AG04449 (cell line): ENCODE measurements at regions of chr1 and their contacts with region 1.

Region 1: GRCh38 chr1:18902523-18903290 is at the start of gene ALDH4A1:
- DNase-seq: peak; percentile 86
- H3K4me3 ChIP-seq: peak within 1 kb of the TSS; percentile 83
- CTCF ChIP-seq: no peak

Region 2: GRCh38 chr1:18854331-18855025 is 48.2 kb before region 1 on chr1:
- CTCF ChIA-PET with region 1: no interaction called
- POLR2A ChIA-PET with region 1: no interaction called
- DNase-seq: no peak
- H3K4me3 ChIP-seq: no peak overlapping the region
- CTCF ChIP-seq: no peak

Region 3: DNA sequence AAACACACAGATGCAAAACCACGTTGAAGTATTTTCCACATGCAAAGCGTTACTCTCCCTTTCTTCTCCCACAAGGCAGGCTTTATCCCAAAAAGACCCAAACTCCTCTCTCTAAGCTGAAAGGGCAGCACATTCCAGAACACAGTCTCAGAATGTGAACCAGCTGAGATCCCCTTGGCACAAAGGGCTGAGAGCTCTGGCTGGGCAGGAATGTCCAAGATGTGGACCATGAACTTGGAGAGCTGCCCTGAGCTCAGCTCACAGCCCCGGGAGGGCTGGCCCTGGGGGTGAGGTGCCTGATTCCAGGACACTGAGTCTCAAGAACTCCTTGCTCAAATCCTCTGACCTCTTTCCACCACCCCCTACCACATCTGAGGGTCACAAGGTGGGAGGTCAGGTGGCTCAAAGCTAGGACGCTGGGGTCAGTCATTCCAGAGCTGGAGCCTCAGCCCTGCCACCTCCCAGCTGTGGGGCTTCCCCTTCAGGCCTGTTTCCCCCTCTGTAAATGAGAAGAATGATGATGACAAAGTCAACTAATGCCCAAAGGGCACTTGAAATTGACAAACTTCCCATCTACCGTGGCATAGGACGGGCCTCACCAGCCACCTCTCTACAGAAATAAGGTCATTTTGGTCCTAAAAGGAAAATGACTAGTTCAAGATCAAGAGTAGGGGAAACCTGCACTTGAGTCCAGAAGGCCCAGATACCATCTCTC is 11.8 kb before region 1 on chr1:
- CTCF ChIA-PET with region 1: interaction called, 21 read pairs
- POLR2A ChIA-PET with region 1: interaction called, 3 read pairs
- DNase-seq: no peak
- H3K4me3 ChIP-seq: no peak overlapping the region
- CTCF ChIP-seq: no peak

Region 4: DNA sequence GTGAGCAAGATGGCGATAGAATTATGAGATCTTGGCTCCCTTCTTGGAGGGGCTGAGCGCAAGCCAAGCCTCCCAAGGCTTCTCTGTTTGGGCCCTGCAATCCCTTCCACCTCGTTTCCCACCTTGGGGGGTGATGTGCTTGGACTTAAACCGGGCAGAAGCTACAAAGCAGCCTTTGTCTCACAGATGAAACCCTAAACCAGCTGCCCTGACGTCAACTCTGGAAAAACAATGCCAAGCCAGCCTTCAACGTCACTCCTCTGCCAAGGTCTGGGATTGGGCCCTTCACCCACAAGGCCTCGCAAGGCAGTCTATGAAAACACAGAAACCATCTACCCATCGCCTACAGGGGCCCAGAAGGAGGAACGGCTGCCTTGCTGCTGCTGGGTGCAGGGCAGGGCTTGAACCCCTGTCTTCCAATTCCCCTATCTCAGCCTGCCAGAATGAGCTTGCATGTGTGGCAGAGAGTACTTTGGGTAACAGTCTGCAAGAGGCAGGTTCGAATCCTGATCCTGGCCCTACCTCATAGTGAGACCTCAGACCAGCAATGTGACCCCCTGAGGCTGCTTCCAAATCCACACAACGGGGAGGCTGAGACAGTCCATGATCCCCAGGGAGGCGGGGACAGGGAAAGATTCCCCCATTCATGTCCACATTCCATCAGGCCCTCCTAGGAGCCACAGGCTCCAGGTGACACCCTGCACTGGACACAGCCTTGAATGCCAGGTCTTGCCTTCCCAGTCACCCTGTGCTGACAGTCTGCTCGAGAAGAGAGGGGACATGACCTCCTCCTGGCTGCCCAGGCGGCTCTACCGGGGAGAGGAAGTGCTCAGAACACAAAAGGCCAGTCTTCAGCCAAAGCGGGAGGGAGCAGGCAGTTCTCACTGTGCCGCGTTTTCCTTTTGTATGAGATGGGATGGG is 38.8 kb after region 1 on chr1:
- CTCF ChIA-PET with region 1: interaction called, 28 read pairs
- POLR2A ChIA-PET with region 1: interaction called, 3 read pairs
- DNase-seq: no peak
- H3K4me3 ChIP-seq: no peak overlapping the region
- CTCF ChIP-seq: no peak

Region 5: GRCh38 chr1:18972531-18972930 is 69.8 kb after region 1 on chr1:
- CTCF ChIA-PET with region 1: interaction called, 94 read pairs
- POLR2A ChIA-PET with region 1: interaction called, 3 read pairs
- DNase-seq: no peak
- H3K4me3 ChIP-seq: no peak overlapping the region
- CTCF ChIP-seq: no peak

Region 6: DNA sequence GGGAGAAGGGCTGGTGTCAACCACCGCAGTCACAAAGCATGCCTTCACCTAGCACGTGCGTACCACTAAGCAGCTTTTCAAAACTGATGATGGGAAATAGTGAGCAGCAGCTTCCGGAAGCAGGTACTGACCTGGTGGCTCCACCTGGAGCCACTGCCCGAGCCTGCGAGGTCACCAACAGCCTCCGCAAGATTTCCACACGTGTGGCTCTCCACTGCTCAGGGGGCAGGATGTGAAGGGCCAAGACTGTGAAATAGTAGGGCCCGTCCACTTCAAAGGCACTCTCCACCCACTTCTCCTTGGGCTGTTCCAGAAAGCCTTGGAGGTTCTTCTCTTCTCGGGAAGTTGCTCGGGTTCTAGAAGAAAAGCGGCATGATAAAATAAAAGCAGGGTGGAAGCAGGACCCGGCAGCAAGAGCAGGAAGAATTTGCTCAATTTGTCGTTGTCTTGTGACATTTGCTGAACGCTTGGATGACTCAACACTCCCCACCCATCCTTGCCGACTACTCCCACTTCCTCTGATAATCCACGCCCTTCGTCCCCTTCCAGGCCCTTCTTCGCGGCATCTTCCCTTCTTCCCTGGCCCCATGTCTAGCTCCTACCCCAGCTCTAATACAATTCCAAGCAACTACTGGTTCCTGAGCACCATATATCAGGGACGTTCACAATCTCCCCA is 178.6 kb after region 1 on chr1:
- CTCF ChIA-PET with region 1: interaction called, 85 read pairs
- POLR2A ChIA-PET with region 1: no interaction called
- DNase-seq: no peak
- H3K4me3 ChIP-seq: no peak overlapping the region
- CTCF ChIP-seq: no peak

Region 7: DNA sequence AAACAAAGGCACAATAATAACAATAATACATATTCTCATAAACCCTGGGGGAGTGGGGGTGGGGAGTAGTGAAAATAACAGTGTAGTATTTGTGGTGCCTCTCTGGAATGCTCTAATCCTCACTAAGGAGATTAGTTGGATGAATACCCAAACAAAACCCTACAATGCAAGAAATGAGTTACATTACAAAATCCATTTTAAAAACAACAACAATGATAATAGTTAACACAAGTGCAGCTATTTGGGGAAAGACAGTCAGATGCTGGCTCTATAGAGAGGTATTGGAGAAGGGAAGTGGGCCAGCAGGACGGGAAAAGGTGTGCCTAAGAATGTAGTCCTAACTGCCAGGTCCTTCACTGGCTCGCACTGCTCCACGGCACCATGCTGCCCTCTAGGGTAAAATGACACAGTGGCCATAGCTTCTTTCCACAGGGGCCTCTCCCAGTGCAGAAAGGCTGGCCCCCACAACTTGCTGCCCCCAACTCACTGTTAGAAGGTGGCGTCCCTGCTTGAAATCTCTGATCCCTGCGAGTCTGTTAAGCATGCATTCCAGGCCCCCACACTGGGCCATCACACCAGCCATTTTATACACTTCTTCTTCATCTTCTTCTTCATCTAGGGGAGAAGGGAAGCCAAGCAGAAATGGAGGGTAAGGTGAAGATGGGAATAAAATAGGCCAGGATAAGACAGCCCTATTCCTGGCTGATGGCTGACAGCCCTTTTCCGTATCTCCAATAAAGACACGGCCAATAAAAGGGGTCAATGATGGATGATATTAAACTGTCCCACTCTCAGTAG is 193.5 kb after region 1 on chr1:
- CTCF ChIA-PET with region 1: interaction called, 117 read pairs
- POLR2A ChIA-PET with region 1: no interaction called
- DNase-seq: no peak
- H3K4me3 ChIP-seq: no peak overlapping the region
- CTCF ChIP-seq: peak; percentile 35